Activated CD4-positive, alpha-beta T cell treated with anti-CD3 and anti-CD28 coated beads for 36 hours (primary cell): ENCODE measurements at regions of chr9 and their contacts with region 1.

Region 1: DNA sequence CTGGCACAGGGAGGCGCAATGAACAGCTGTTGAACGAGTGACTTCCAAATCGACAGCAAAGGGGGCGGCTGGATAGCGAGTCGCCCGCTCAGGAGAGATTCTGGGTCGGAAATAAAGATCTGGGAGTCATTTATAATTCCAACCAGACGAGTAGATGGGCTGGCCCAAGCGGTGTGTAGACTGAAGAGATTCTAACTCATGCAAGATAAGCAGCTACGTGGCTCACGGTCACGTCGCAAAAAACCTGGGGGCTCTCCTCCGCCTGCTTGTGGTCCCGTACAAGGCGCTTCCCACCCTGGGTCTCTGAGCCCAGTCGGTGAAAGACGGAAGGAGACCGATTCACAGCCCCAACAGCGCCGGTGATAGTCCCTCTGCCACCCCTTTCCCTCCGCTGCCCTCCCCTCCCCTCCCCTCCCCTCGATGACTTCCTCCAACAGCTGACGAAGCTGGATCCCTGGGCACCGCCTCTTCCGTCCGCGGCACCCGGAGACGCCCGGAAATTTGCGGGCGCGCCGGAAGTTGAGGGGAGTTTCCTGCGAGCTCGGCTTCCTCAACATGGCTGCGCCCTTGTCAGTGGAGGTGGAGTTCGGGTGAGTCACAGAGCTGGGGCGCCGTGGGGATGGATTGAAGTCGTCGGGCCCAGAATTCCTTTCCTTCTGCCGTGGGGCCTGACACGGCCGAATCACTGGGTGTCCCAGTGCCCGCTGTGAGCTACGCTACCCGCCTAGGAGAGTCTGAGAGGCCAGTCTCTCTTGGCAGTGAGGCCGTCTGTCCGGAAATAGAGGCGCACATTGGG is at the start of gene URM1:
- DNase-seq: peak; percentile 98
- ATAC-seq: peak; percentile 98
- H3K4me3 Mint-ChIP-seq: peak within 1 kb of the TSS; percentile 87
- H3K27ac Mint-ChIP-seq: peak within 1 kb of the TSS; percentile 89
- H3K4me1 Mint-ChIP-seq: peaks cover 27% of the 10 kb centered on the region
- H3K27me3 Mint-ChIP-seq: no peaks in the 10 kb centered on the region
- total RNA-seq, gene URM1: 39.9 to 56.1 TPM

Region 2: DNA sequence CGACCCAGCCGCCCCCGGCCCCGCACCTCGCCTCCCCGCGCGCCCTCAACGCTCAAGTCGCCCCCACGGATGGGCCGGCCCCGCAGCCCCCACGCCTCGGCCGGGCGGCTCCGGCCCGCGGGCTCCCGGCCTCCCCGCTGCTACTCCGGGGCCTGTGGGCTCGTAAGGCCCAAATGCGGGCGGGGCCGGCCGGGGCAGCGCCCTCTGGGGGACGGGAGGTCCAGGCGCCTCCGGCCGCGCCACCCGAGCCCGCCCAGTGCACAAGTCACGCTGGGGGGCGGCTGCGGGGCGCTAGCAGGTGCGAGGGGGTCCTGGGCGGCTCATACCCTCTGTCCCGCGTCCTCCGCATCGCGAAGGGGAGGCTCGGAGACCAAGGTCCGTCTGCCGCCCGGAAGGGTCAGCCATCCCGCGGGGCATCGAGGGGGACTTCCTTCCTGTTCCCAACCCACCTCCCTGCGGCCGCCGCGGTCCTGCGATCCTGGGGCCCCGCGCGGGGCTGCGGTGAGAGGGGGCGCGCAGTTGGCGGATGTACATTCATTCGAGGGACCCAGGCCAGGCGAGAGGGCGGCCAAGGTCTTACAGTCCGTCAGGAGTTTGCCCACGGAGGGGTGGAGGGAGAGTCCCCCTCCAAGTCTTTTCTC is 179.5 kb before region 1 on chr9 and contains the start of gene CIZ1:
- CTCF ChIA-PET with region 1: no interaction called
- POLR2A ChIA-PET with region 1: no interaction called
- intact Hi-C with region 1: no loop called
- DNase-seq: peak; percentile 84
- ATAC-seq: peak; percentile 82
- H3K4me3 Mint-ChIP-seq: peak within 1 kb of the TSS; percentile 87
- H3K27ac Mint-ChIP-seq: peak within 1 kb of the TSS; percentile 85
- H3K4me1 Mint-ChIP-seq: peaks cover 28% of the 10 kb centered on the region
- H3K27me3 Mint-ChIP-seq: no peaks in the 10 kb centered on the region
- total RNA-seq, gene CIZ1: 79.5 to 110 TPM

Region 3: GRCh38 chr9:128218518-128219389 is 152.3 kb before region 1 on chr9:
- CTCF ChIA-PET with region 1: no interaction called
- POLR2A ChIA-PET with region 1: no interaction called
- intact Hi-C with region 1: loop called in 1 of 2 experiments (anchors 1 kb)
- DNase-seq: peak; percentile 97
- ATAC-seq: peak; percentile 98
- H3K4me3 Mint-ChIP-seq: peak overlapping the region; percentile 71
- H3K27ac Mint-ChIP-seq: peak overlapping the region; percentile 74
- H3K4me1 Mint-ChIP-seq: peaks cover 11% of the 10 kb centered on the region
- H3K27me3 Mint-ChIP-seq: no peaks in the 10 kb centered on the region

Region 4: GRCh38 chr9:128296337-128297220 is 74.4 kb before region 1 on chr9:
- CTCF ChIA-PET with region 1: interaction called, 4 read pairs
- POLR2A ChIA-PET with region 1: no interaction called
- intact Hi-C with region 1: loop called in 1 of 2 experiments (anchors 1 kb)
- DNase-seq: no peak
- ATAC-seq: no peak
- H3K4me3 Mint-ChIP-seq: no peak overlapping the region
- H3K27ac Mint-ChIP-seq: no peak overlapping the region
- H3K4me1 Mint-ChIP-seq: no peaks in the 10 kb centered on the region
- H3K27me3 Mint-ChIP-seq: no peaks in the 10 kb centered on the region

Region 5: GRCh38 chr9:128420060-128420650 is 49.1 kb after region 1 on chr9:
- CTCF ChIA-PET with region 1: interaction called, 3 read pairs
- POLR2A ChIA-PET with region 1: no interaction called
- intact Hi-C with region 1: loop called in 1 of 2 experiments (anchors 2 kb)
- DNase-seq: peak; percentile 79
- ATAC-seq: peak; percentile 75
- H3K4me3 Mint-ChIP-seq: peak overlapping the region; percentile 59
- H3K27ac Mint-ChIP-seq: no peak overlapping the region
- H3K4me1 Mint-ChIP-seq: peaks cover 10% of the 10 kb centered on the region
- H3K27me3 Mint-ChIP-seq: peaks cover 25% of the 10 kb centered on the region

Region 6: DNA sequence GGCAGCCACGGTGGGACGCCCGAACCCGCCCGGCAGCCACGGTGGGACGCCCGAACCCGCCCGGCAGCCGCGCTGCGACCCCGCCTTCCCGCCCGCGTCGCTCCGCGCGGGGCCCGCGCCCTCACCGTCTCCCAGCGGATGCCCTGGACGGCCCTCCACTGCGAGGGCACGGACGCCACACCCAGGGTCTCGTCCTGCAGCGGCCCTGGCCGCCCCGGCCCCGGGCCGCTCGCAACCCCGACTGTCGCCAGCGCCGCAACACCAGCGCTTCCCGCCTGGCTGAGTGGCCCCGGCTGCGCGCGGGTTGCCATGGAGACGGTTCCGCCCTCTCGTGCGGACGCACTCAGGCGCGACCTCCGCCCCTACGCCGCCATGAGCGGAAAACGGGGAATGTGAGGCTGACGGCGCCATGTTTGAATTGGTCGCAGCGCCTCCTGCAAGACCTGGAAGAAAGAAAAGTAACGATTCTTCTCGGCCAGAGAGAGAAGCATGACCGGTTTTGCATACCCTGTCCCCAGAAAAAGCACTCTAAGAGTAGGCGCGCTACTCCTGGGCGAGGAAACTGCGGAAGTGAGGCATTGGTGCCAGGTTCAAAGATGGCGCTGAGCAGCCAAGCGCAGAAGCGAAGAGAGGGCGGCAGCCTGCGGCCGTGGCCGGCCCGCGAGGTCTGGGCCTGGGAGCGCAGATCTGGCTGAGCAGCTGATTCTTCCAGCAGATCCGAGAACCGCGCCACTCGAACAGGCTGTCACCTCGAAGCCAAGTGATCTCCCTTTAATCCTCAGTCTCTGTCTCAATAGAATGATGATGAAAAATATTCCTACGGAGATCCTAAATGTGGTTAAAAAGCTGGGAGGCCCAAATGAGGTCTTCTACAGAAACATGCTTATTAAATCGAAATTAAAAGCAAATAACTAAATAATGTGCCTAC is 285.7 kb after region 1 on chr9 and contains the start of gene DYNC2I2:
- CTCF ChIA-PET with region 1: no interaction called
- POLR2A ChIA-PET with region 1: no interaction called
- intact Hi-C with region 1: loop called in 1 of 2 experiments (anchors 1 kb)
- DNase-seq: peak; percentile 99
- ATAC-seq: peak; percentile 98
- H3K4me3 Mint-ChIP-seq: peak within 1 kb of the TSS; percentile 82
- H3K27ac Mint-ChIP-seq: peak within 1 kb of the TSS; percentile 100
- H3K4me1 Mint-ChIP-seq: peaks cover 6% of the 10 kb centered on the region
- H3K27me3 Mint-ChIP-seq: no peaks in the 10 kb centered on the region
- total RNA-seq, gene DYNC2I2: 26.7 to 35.7 TPM

Region 7: DNA sequence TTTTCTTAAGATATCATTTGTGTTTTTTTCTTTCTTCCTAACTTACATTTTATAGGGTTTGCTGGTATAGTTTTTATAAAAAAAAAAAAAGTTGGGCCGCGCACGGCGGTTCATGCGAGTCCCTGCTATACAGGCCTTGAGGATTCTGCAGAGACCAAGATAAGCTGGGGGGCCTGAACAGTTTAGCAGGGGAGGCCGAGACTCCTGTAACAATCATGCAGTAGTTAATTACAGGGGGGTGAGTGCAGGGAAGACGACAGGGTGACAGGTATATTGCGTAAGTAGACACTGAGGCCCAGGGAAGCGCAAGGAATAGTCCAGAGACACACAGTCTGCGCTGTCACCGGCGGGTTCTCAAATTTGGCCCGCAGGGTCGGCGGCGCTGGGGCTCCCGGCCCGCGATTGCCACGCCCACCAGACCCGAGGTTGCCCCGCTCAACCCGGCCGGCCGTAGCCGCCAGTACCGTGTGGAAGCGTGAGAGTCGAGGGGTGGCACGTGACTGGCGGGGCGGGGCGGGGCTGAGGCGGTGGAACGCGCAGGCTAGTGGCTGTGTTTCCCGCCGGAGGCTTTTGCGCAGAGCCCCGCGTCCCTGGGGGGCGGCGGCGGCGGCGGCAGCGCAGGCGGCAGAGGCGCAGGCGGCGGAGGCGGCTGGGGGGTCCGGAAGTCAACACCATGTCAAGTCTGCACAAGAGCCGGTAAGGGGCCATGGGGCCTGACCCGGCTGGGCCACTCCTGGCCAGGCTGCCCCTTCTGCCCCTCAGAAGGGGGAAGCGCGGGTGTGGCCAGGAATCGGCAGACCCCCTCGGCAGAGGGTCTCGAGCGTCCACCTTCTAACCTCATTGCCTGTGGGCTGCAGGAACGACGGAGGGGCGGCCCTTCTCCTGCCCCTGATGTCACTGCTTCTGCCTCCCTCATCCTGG is 415.9 kb after region 1 on chr9 and contains the start of gene TBC1D13:
- CTCF ChIA-PET with region 1: no interaction called
- POLR2A ChIA-PET with region 1: no interaction called
- intact Hi-C with region 1: loop called in 1 of 2 experiments (anchors 2 kb)
- DNase-seq: peak; percentile 94
- ATAC-seq: peak; percentile 97
- H3K4me3 Mint-ChIP-seq: peak within 1 kb of the TSS; percentile 87
- H3K27ac Mint-ChIP-seq: peak within 1 kb of the TSS; percentile 87
- H3K4me1 Mint-ChIP-seq: peaks cover 18% of the 10 kb centered on the region
- H3K27me3 Mint-ChIP-seq: no peaks in the 10 kb centered on the region
- total RNA-seq, gene TBC1D13: 10.5 to 14.0 TPM

Region 8: GRCh38 chr9:129036241-129036922 is 665.4 kb after region 1 on chr9 and contains the start of gene MIGA2:
- CTCF ChIA-PET with region 1: no interaction called
- POLR2A ChIA-PET with region 1: no interaction called
- intact Hi-C with region 1: loop called in 1 of 2 experiments (anchors 1 kb)
- DNase-seq: peak; percentile 96
- ATAC-seq: peak; percentile 99
- H3K4me3 Mint-ChIP-seq: peak within 1 kb of the TSS; percentile 98
- H3K27ac Mint-ChIP-seq: peak within 1 kb of the TSS; percentile 83
- H3K4me1 Mint-ChIP-seq: peaks cover 27% of the 10 kb centered on the region
- H3K27me3 Mint-ChIP-seq: no peaks in the 10 kb centered on the region
- total RNA-seq, gene MIGA2: 15.7 to 25.8 TPM